ENCODE measurements at regions of chr15 and their contacts with region 1.

Region 1: GRCh38 chr15:51227940-51228783 is 110.2 kb downstream of the CYP19A1 start:
- DNase-seq: peak; percentile 76
- ATAC-seq: peak; percentile 97
- H3K4me3 ChIP-seq: peak overlapping the region; percentile 24; the same call in 1 of the 2 replicates
- H3K27ac ChIP-seq: peak overlapping the region; percentile 75
- H3K4me1 ChIP-seq: peaks cover 16% of the 10 kb centered on the region
- H3K27me3 ChIP-seq: no peaks in the 10 kb centered on the region
- CTCF ChIP-seq: no peak
- EP300 ChIP-seq: no peak
- POLR2A ChIP-seq: peak; percentile 27; the same call in 1 of the 2 replicates
- RAD21 ChIP-seq: no peak

Region 2: DNA sequence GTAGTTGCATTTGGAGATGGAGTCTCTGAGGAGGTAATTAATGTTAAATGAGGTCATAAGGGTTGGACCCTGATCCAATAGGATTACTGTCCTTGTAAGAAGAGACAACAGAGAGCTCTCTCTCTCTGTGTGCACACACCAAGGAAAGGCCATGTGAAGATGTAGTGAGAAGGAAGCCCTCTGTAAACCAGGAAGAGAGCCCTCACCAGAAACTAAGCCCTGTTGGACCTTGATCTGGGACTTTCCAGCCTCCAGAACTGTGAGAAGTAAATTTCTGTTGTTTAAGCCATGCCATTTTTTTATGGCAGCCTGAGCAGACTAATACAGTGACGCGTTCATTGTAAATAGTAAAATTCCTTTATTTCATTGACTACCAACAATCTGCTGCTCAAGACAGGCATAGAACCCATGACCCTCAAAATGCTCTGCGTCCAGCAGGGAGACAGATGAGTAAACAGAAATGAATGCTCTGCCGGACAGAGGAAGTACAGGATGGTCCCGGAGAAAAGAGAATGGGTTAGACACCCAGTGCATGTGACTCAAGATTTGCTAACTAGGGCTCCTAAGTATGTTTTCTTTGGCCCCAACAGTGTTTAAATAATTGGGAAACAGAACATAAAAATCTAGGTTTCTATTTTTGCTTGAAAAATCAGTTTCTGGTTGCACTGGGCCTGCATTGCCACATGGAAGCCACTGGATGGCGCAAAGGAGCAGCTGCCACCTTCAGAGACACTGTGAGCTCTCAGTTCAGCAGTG is 95.6 kb before region 1 on chr15:
- CTCF ChIA-PET with region 1: no interaction called
- POLR2A ChIA-PET with region 1: no interaction called
- RAD21 ChIA-PET with region 1: no interaction called
- SMC1A ChIA-PET with region 1: no interaction called
- in situ Hi-C with region 1: no loop called
- intact Hi-C with region 1: no loop called
- DNase-seq: no peak
- ATAC-seq: peak; percentile 36; the same call in 2 of the 3 replicates
- H3K4me3 ChIP-seq: no peak overlapping the region
- H3K27ac ChIP-seq: no peak overlapping the region
- H3K4me1 ChIP-seq: no peaks in the 10 kb centered on the region; the same call in 1 of the 2 replicates
- H3K27me3 ChIP-seq: peaks cover 0 to 1% of the 10 kb centered on the region in 2 experiments; a peak in 2 of 4 replicates
- CTCF ChIP-seq: peak; percentile 57 to 80 (median 79)
- EP300 ChIP-seq: no peak
- POLR2A ChIP-seq: no peak
- RAD21 ChIP-seq: peak; percentile 39; the same call in 1 of the 2 replicates

Region 3: GRCh38 chr15:51192521-51193280 is 35.5 kb before region 1 on chr15:
- CTCF ChIA-PET with region 1: interaction called, 15 read pairs
- POLR2A ChIA-PET with region 1: no interaction called
- RAD21 ChIA-PET with region 1: no interaction called
- SMC1A ChIA-PET with region 1: interaction called, 4 read pairs
- in situ Hi-C with region 1: no loop called
- intact Hi-C with region 1: no loop called
- DNase-seq: peak; percentile 20
- ATAC-seq: peak; percentile 97
- H3K4me3 ChIP-seq: no peak overlapping the region
- H3K27ac ChIP-seq: no peak overlapping the region
- H3K4me1 ChIP-seq: no peaks in the 10 kb centered on the region
- H3K27me3 ChIP-seq: no peaks in the 10 kb centered on the region; a peak in 2 of 4 replicates
- CTCF ChIP-seq: peak; percentile 91 to 96 (median 92)
- EP300 ChIP-seq: no peak
- POLR2A ChIP-seq: no peak
- RAD21 ChIP-seq: peak; percentile 79

Region 4: DNA sequence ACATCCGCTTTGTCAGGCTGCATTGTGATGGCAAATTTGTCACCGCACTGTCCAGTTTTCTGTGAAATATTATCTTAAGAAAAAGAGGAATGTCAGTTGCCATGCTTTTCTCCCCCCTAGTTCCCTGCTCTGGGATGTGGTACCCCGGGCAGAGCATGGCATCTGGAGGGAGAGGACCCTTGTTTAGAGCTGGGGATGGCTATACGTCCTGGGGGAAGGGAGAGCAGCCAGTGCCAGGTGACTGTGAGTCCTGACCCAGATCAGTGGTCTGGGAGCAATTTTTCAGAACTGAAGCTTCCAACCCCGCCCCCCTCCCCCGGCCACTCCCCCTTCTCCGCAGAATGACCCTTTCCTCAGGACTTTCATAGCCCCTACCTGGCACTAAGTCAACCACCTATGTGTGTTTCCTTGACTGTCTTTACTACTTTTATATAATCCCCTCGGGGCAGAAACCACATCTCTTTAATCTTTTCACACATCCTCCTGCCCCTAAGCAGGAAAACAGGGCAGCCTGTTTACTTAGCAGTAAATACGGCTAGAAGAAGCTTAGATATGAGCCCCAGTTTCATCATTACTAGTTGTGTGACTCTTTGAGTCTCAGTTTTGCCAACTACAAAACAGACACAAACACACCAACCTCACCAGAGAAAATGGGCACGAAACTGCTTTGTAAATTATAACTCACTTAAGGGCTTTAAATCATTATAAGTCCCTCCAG is 11.7 kb after region 1 on chr15:
- CTCF ChIA-PET with region 1: interaction called, 13 read pairs
- POLR2A ChIA-PET with region 1: interaction called, 8 read pairs
- RAD21 ChIA-PET with region 1: interaction called, 7 read pairs
- SMC1A ChIA-PET with region 1: interaction called, 23 read pairs
- in situ Hi-C with region 1: no loop called
- intact Hi-C with region 1: loop called (anchors 1 kb)
- DNase-seq: no peak
- ATAC-seq: peak; percentile 78
- H3K4me3 ChIP-seq: no peak overlapping the region
- H3K27ac ChIP-seq: no peak overlapping the region
- H3K4me1 ChIP-seq: peaks cover 16% of the 10 kb centered on the region
- H3K27me3 ChIP-seq: no peaks in the 10 kb centered on the region
- CTCF ChIP-seq: no peak
- EP300 ChIP-seq: no peak
- POLR2A ChIP-seq: no peak
- RAD21 ChIP-seq: no peak

Region 5: DNA sequence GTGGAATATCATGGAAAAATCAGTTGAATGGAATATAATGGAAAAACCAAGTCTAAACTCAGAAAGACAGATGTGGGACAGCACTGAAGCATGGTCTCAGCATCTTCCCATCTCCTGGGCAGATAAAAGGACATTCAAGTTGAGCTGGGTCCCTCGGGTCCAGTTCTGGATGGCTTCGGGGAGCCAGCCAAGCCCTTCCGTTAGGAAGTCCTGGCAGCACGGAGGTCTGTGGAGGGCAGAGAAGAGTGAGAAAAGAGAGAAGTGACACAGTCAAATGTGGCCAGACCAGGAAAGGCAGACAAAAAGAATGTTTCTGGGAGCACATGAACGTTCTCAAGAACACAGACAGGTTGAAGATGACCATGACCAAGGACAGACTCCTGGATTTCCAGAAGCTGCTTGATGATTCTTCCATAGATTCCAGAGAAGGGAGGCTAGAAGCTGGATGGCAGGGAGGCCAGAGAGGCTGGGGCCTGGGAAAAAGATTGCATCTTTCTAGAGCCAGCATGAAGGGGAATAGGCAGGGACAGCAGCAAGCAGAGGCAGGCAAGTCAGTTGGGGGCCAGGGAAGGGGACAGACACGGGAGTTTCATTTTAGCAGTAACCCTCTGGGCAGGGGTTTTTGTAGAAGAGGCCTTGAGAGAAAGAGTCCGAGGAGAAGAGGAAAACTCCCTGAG is 67.6 kb after region 1 on chr15:
- CTCF ChIA-PET with region 1: no interaction called
- POLR2A ChIA-PET with region 1: no interaction called
- RAD21 ChIA-PET with region 1: no interaction called
- SMC1A ChIA-PET with region 1: no interaction called
- in situ Hi-C with region 1: no loop called
- intact Hi-C with region 1: no loop called
- DNase-seq: no peak
- ATAC-seq: no peak
- H3K4me3 ChIP-seq: no peak overlapping the region
- H3K27ac ChIP-seq: no peak overlapping the region
- H3K4me1 ChIP-seq: no peaks in the 10 kb centered on the region
- H3K27me3 ChIP-seq: no peaks in the 10 kb centered on the region; a peak in 2 of 4 replicates
- CTCF ChIP-seq: no peak
- EP300 ChIP-seq: no peak
- POLR2A ChIP-seq: no peak
- RAD21 ChIP-seq: no peak

Region 6: DNA sequence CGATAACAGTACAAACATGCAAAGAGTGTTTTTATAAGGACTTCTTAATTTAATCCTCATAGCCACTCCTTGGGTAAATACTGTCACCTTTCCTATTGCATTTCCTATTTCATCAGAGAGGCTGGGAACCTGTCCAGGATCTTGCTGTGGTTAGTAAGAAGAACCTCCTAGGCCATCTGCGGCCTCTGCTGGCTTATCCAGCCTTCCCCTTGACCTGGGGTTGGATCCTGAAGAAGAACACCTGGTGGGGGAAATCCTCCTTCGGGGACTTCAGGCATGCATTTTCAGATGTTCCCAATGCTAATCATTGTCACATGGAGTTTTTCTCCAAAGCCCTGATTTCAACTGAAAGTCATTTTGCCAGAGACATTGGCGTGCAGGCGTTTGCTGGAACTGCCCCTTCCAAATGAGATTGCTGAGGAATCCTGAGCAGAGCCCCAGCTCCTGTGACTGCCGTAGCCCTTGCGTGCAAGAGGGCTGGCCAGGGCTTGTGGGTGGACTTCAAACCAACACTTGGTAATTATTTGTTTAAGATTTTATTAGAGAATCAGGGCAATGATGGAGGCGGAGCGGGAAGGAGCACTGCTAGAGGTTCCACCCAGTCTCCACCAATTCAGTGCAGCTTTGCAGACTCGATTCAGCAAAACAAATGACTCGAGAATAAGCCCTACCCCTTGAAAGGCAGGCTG is 138.9 kb after region 1 on chr15:
- CTCF ChIA-PET with region 1: interaction called, 10 read pairs
- POLR2A ChIA-PET with region 1: no interaction called
- RAD21 ChIA-PET with region 1: interaction called, 5 read pairs
- SMC1A ChIA-PET with region 1: interaction called, 5 read pairs
- in situ Hi-C with region 1: no loop called
- intact Hi-C with region 1: no loop called
- DNase-seq: no peak
- ATAC-seq: no peak
- H3K4me3 ChIP-seq: no peak overlapping the region
- H3K27ac ChIP-seq: no peak overlapping the region
- H3K4me1 ChIP-seq: peaks cover 4% of the 10 kb centered on the region
- H3K27me3 ChIP-seq: peaks cover 5 to 8% of the 10 kb centered on the region in 2 experiments; a peak in 3 of 4 replicates
- CTCF ChIP-seq: no peak
- EP300 ChIP-seq: no peak
- POLR2A ChIP-seq: no peak
- RAD21 ChIP-seq: no peak

Region 7: GRCh38 chr15:51380999-51381795 is 153.0 kb after region 1 on chr15:
- CTCF ChIA-PET with region 1: interaction called, 64 read pairs
- POLR2A ChIA-PET with region 1: no interaction called
- RAD21 ChIA-PET with region 1: interaction called, 33 read pairs
- SMC1A ChIA-PET with region 1: interaction called, 11 read pairs
- in situ Hi-C with region 1: no loop called
- intact Hi-C with region 1: loop called (anchors 2 kb)
- DNase-seq: peak; percentile 34
- ATAC-seq: peak; percentile 98
- H3K4me3 ChIP-seq: no peak overlapping the region
- H3K27ac ChIP-seq: no peak overlapping the region
- H3K4me1 ChIP-seq: no peaks in the 10 kb centered on the region
- H3K27me3 ChIP-seq: peaks cover 0 to 6% of the 10 kb centered on the region in 2 experiments; a peak in 3 of 4 replicates
- CTCF ChIP-seq: peak; percentile 81 to 99 (median 97); a peak in 5 of 6 replicates
- EP300 ChIP-seq: no peak
- POLR2A ChIP-seq: no peak
- RAD21 ChIP-seq: peak; percentile 98

Region 8: GRCh38 chr15:51401872-51402517 is 173.8 kb after region 1 on chr15:
- CTCF ChIA-PET with region 1: interaction called, 10 read pairs
- POLR2A ChIA-PET with region 1: no interaction called
- RAD21 ChIA-PET with region 1: interaction called, 4 read pairs
- SMC1A ChIA-PET with region 1: interaction called, 5 read pairs
- in situ Hi-C with region 1: no loop called
- intact Hi-C with region 1: no loop called
- DNase-seq: no peak
- ATAC-seq: peak; percentile 48; the same call in 2 of the 3 replicates
- H3K4me3 ChIP-seq: no peak overlapping the region
- H3K27ac ChIP-seq: no peak overlapping the region
- H3K4me1 ChIP-seq: no peaks in the 10 kb centered on the region
- H3K27me3 ChIP-seq: peaks cover 3 to 4% of the 10 kb centered on the region in 2 experiments; a peak in 3 of 4 replicates
- CTCF ChIP-seq: peak; percentile 48 to 60 (median 52)
- EP300 ChIP-seq: no peak
- POLR2A ChIP-seq: no peak
- RAD21 ChIP-seq: peak; percentile 56

Measured in GM12878 (cell line).